ENCODE measurements at regions of chr7 and their contacts with region 1.

Region 1: DNA sequence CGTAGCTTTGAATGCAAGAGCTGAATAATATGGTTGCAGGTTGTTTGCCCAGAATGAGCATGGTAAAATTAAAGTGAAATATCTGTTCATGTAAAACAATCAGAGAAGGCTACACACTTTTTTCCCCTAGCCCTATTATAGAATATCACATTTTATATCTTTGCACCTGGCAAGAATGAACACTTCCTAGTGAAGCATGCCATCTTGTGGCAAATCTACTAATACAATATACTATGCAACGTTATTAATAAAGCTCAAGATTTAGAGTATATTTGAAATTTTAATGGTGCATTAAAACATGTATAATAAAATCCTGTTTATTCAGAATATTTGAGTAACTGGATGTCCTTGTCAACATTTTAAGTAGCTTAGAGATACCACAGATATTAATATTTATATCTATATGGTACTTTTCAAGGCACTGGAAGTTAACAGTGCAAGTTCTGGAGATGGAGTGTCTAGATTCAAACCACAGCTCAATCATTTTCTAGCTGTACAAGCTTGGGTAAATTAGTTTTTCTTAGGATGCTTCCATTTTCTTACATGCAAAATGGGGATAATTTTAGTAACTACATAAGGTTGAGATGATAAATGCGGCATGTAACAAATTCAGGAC is 643.1 kb upstream of the SEMA3D start:
- DNase-seq: no peak
- H3K4me3 ChIP-seq: no peak overlapping the region
- H3K27ac ChIP-seq: no peak overlapping the region
- H3K27me3 ChIP-seq: no peaks in the 10 kb centered on the region
- CTCF ChIP-seq: peak; percentile 44

Region 2: GRCh38 chr7:85840554-85840953 is 10.6 kb after region 1 on chr7:
- CTCF ChIA-PET with region 1: interaction called, 16 read pairs
- POLR2A ChIA-PET with region 1: no interaction called
- DNase-seq: no peak
- H3K4me3 ChIP-seq: no peak overlapping the region
- H3K27ac ChIP-seq: no peak overlapping the region
- H3K27me3 ChIP-seq: no peaks in the 10 kb centered on the region
- CTCF ChIP-seq: no peak

Region 3: GRCh38 chr7:85851571-85852193 is 21.8 kb after region 1 on chr7:
- CTCF ChIA-PET with region 1: interaction called, 12 read pairs
- POLR2A ChIA-PET with region 1: no interaction called
- DNase-seq: peak; percentile 29
- H3K4me3 ChIP-seq: no peak overlapping the region
- H3K27ac ChIP-seq: no peak overlapping the region
- H3K27me3 ChIP-seq: no peaks in the 10 kb centered on the region
- CTCF ChIP-seq: peak; percentile 56